Activated naive CD4-positive, alpha-beta T cell treated with anti-CD3 and anti-CD28 coated beads, Interleukin-2, amount 10 ng/mL, durations not matched to agents 7 days and 5 days (primary cell): ENCODE measurements at regions of chr10 and their contacts with region 1.

Region 1: DNA sequence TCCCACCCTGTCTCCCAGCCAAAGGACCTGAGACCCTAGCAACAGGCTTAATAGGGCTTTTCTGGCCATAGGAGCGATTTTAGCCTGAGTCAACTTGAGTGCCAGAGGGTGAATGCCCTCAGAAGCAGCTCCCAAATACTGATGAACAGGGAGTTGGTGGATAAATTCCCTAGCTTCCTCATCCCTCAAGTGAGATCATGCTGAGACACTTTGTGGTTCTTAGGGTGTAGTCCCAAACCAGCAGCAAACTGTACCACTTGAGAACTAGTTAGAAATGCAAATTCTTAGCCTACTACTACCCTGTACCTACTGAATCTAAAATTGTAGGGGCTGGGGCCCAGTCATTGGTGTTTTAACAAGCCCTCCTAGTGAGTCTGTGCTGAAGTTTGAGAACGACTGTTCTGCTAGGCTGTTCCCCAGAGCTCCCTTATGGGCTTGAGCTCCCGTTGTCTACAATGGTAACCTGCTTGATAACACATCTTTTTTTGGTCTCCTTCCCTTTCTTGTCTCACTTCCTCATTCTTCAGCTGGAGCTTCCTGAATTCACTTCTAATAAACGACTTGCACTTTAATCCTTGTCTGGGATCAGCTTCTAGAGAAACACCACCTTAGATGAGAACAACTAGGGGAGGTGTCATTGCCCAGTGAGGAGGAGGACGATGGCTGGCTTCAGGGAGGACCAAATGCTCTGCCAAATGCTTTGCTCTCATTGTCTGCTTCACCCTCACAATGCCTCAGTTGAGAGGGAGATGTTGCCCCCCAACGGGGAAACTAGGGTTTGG is 18.2 kb upstream of the CDH23 start:
- DNase-seq: no peak
- H3K4me3 Mint-ChIP-seq: no peak overlapping the region
- H3K27ac Mint-ChIP-seq: no peak overlapping the region
- H3K4me1 Mint-ChIP-seq: peaks cover 13% of the 10 kb centered on the region
- H3K27me3 Mint-ChIP-seq: peaks cover 18% of the 10 kb centered on the region

Region 2: DNA sequence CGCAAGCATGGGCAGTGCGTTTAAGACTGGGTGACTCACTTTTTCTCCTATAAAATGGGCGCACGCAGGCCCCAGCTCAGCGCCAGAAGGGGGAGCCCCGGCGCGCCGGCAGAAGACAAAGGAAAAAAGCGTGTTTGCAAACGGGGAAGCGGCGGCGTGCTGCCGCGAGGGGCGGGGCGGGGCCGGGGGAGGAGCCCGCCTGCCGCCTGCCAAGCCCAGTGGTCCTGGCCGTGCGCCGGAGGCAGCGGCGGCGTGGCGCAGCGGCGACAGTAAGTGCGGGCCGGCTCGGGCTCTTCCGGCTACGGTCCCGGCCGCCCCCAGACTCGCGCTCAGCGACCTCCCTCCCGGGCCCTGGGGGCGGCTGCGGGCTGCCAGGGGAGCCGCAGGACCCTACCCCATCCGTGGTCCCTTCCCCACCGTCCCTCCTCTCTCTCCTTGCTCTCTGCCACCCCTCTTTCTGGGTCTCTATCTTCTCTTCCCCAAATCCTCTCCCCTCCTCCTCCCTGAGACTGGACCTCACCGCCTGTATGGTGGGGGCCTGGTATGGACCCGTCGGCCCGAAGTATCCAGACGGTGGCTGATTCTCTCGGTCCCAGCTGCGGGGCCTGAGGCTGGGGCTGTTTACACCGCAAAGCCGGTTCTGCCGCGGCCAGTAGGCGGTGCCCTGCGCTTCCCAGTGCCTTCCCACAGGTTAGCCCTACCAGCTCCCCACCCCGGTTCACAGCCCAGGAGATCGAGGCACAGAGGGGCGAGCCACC is 59.3 kb before region 1 on chr10 and contains the start of gene SLC29A3:
- CTCF ChIA-PET with region 1: interaction called, 12 read pairs
- DNase-seq: peak; percentile 89
- H3K4me3 Mint-ChIP-seq: peak within 1 kb of the TSS; percentile 94
- H3K27ac Mint-ChIP-seq: peak within 1 kb of the TSS; percentile 61
- H3K4me1 Mint-ChIP-seq: peaks cover 42% of the 10 kb centered on the region
- H3K27me3 Mint-ChIP-seq: peaks cover 16% of the 10 kb centered on the region

Region 3: DNA sequence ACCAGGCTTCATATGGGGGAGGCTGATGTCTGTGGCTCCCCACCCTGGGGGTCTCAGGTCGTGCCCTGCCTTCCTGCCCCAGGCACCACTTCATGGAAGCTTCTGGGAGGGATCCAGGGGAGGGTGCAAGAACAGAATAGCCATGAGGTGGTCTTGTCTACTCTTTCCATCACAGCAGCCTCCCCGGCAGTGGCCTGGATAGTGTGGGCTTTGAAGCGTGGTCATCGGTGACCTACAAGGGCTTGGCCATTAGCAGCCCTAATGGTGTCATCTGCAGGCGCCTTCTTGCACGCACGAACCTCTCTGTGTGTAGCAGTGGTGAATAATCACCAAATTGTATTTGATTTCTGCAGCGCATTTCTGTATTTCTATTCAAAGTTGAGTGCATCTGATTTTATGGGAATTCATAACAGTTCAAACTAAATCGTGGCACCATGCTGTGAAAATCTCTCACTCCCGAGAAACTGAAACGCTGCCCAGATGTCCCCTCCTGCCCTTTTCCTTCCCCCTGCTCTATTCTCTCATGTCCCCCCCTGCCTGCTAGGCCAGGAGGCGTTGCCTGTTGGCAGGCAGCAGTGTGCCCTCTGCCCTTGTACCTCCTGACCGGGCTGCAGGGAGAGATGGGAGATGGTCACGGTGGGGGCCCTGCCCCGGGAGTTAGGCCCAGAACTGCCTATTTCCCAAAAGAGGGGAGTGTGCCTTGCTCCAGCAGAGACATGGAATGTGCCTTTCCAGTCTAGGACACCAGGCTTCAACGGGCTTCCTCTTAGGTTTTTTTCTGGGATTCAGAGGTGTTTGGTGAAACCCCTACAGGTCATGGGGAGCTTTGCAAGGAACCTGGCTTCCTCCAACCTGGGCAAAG is 52.9 kb after region 1 on chr10:
- CTCF ChIA-PET with region 1: no interaction called
- DNase-seq: no peak
- H3K4me3 Mint-ChIP-seq: no peak overlapping the region
- H3K27ac Mint-ChIP-seq: no peak overlapping the region
- H3K4me1 Mint-ChIP-seq: no peaks in the 10 kb centered on the region
- H3K27me3 Mint-ChIP-seq: peaks cover 17% of the 10 kb centered on the region